ENCODE measurements at regions of chr1 and their contacts with region 1.

Region 1: DNA sequence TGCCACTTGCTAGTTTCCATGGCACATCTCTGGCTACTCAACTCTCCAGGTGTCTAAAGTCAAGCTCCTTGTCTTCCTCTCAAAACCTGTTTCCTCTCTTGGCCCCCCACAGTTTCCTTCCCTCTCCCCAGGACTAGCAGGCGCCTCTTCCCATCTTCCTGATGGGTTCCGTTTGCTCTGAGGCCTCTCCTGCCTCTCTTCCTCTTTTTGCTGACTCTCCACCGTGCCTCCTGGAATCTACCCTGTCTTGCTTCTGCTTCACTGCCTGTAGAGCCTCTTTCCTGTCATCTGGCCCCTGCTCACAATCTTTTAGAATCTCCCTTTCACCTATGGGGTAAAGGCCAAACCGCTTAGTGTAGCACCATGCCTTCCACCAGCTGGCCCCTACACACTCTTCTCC is 21.8 kb upstream of the LHX4 start:
- DNase-seq: no peak
- H3K4me3 ChIP-seq: no peak overlapping the region
- H3K27ac ChIP-seq: no peak overlapping the region
- H3K4me1 ChIP-seq: peaks cover 7% of the 10 kb centered on the region
- H3K27me3 ChIP-seq: no peaks in the 10 kb centered on the region
- CTCF ChIP-seq: no peak

Region 2: DNA sequence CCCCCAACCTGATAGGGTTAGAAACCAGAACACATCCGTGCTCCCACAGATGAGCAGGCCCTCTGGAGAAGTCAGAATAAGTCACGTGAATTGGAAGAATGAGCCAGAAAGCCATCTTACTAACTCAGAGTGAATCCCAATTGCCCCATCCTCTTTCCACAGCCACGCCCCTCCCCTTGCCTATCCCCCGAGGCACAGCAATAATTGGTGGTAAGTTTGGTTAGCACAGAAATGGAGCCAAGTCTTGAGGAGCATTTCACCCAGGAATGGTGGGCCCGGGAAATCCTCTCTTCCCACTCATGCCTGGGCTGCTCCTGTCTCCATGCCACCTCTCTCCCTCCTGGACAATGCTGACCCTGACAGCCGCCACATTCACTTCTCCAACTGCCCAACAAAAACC is 82.8 kb before region 1 on chr1:
- CTCF ChIA-PET with region 1: no interaction called
- dilution Hi-C with region 1: loop called (anchors 5 kb)
- in situ Hi-C with region 1: no loop called
- intact Hi-C with region 1: no loop called
- DNase-seq: no peak
- H3K4me3 ChIP-seq: no peak overlapping the region
- H3K27ac ChIP-seq: no peak overlapping the region
- H3K4me1 ChIP-seq: no peaks in the 10 kb centered on the region
- H3K27me3 ChIP-seq: no peaks in the 10 kb centered on the region
- CTCF ChIP-seq: no peak